Activated B cell treated with CpG ODN at 0.5 μM for 24 hours (primary cell): ENCODE measurements at regions of chr3 and their contacts with region 1.

Region 1: DNA sequence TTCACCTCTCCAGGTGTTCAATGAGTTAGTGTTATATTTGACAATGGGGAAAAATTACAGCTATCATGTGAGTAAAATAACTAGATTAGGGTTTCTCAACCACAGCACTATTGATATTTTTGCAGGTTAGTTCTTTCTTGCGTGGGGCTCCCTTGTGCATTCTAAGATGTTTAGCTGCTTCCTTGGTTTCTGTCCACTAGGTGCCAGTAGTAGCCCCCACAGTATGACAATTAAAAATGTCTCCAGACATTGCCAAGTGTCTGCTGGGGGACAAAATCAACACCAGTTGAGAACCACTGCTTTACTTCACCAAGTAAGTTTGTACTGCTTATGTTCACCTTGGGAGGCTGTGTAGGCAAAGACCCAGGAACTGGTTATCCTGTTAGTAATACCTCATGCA is 618.7 kb downstream of the EDEM1 start:
- DNase-seq: no peak
- ATAC-seq: no peak
- H3K4me3 Mint-ChIP-seq: no peak overlapping the region
- H3K27ac Mint-ChIP-seq: no peak overlapping the region
- H3K4me1 Mint-ChIP-seq: no peaks in the 10 kb centered on the region
- H3K27me3 Mint-ChIP-seq: no peaks in the 10 kb centered on the region
- CTCF ChIP-seq: no peak

Region 2: GRCh38 chr3:6799264-6799915 is 993.2 kb after region 1 on chr3:
- CTCF ChIA-PET with region 1: no interaction called
- POLR2A ChIA-PET with region 1: no interaction called
- intact Hi-C with region 1: loop called (anchors 2 kb)
- DNase-seq: no peak
- ATAC-seq: no peak
- H3K4me3 Mint-ChIP-seq: no peak overlapping the region
- H3K27ac Mint-ChIP-seq: no peak overlapping the region
- H3K4me1 Mint-ChIP-seq: no peaks in the 10 kb centered on the region
- H3K27me3 Mint-ChIP-seq: peaks cover 2% of the 10 kb centered on the region
- CTCF ChIP-seq: peak; percentile 64